ENCODE measurements at regions of chr9 and their contacts with region 1.

Region 1: GRCh38 chr9:96654443-96655197 is 497 bp downstream of the PRXL2C start:
- DNase-seq: peak; percentile 89
- ATAC-seq: peak; percentile 62
- H3K4me3 ChIP-seq: peak overlapping the region in 4 of 5 experiments; percentile 44 to 84 (median 60)
- H3K4me3 Mint-ChIP-seq: peak overlapping the region; percentile 96
- H3K27ac ChIP-seq: peak overlapping the region; percentile 69 to 85
- H3K27ac Mint-ChIP-seq: peak overlapping the region; percentile 98
- H3K4me1 ChIP-seq: peaks cover 8 to 16% of the 10 kb centered on the region in 2 donors
- H3K4me1 Mint-ChIP-seq: peaks cover 19% of the 10 kb centered on the region
- H3K27me3 ChIP-seq: no peaks in the 10 kb centered on the region
- H3K27me3 Mint-ChIP-seq: no peaks in the 10 kb centered on the region
- CTCF ChIP-seq: no peak

Region 2: DNA sequence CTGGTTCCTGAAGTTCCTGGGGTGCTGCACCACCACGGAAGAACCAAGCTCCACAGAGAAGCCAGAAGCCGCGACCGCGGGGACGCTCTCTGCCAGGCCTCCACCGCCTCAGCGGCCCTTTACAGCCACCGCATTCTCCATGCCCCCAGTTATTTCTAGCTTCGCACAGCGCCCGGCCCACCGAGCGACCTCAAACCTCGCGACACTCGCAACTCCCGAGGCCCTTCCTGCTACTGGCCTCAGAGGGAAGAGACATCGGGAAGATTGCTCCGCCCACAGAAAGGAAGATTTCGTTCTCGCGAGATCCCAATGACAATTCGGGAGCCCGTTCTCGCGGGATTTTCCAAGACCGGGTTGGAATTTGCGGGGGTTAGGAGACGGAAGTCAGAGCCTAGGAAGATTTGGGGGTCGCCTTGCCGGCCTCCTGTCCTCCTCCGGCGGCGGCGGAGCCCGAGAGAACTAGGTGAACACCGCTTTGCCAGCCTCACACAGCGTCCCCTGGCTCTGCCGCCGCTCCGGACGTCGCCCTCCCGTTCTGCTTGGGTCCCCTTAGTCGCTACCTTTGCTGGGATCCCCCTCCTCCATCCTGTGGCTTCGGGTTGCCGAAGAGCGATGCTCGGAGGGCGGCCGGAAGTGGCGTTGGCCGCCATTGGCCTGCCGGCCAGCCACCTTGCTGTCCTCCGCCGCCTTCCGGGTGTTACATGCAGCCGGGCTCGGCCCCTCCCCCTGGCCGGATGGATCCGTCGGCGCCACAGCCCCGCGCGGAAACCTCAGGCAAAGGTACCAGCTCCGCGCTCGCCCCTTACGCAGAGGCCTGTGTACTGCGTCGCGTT is 779.1 kb before region 1 on chr9 and contains the start of gene ERCC6L2:
- CTCF ChIA-PET with region 1: no interaction called
- POLR2A ChIA-PET with region 1: no interaction called
- intact Hi-C with region 1: loop called (anchors 10 kb)
- DNase-seq: peak; percentile 96
- ATAC-seq: peak; percentile 89
- H3K4me3 ChIP-seq: peak within 1 kb of the TSS in 2 of 5 experiments; percentile 76 to 82
- H3K4me3 Mint-ChIP-seq: no peak within 1 kb of the TSS
- H3K27ac ChIP-seq: no peak within 1 kb of the TSS
- H3K27ac Mint-ChIP-seq: no peak within 1 kb of the TSS
- H3K4me1 ChIP-seq: peaks cover 8 to 11% of the 10 kb centered on the region in 2 donors
- H3K4me1 Mint-ChIP-seq: peaks cover 23% of the 10 kb centered on the region
- H3K27me3 ChIP-seq: no peaks in the 10 kb centered on the region
- H3K27me3 Mint-ChIP-seq: no peaks in the 10 kb centered on the region
- CTCF ChIP-seq: no peak
- total RNA-seq, gene ERCC6L2: 52.0 and 54.4 TPM in 2 replicates

Region 3: GRCh38 chr9:96449845-96450612 is 204.6 kb before region 1 on chr9 and contains the start of gene HABP4:
- CTCF ChIA-PET with region 1: no interaction called
- POLR2A ChIA-PET with region 1: no interaction called
- intact Hi-C with region 1: loop called (anchors 1 kb)
- DNase-seq: peak; percentile 96
- ATAC-seq: peak; percentile 95
- H3K4me3 ChIP-seq: peak within 1 kb of the TSS; percentile 59 to 74 (median 65)
- H3K4me3 Mint-ChIP-seq: peak within 1 kb of the TSS; percentile 94
- H3K27ac ChIP-seq: no peak within 1 kb of the TSS
- H3K27ac Mint-ChIP-seq: peak within 1 kb of the TSS; percentile 83
- H3K4me1 ChIP-seq: peaks cover 12 to 13% of the 10 kb centered on the region in 2 donors
- H3K4me1 Mint-ChIP-seq: peaks cover 14% of the 10 kb centered on the region
- H3K27me3 ChIP-seq: peaks cover 0 to 8% (median 0%) of the 10 kb centered on the region in 4 experiments
- H3K27me3 Mint-ChIP-seq: peaks cover 7% of the 10 kb centered on the region
- CTCF ChIP-seq: no peak
- total RNA-seq, gene HABP4: 14.1 and 15.0 TPM in 2 replicates

Region 4: GRCh38 chr9:96686548-96687335 is 32.1 kb after region 1 on chr9:
- CTCF ChIA-PET with region 1: no interaction called
- POLR2A ChIA-PET with region 1: no interaction called
- intact Hi-C with region 1: loop called (anchors 1 kb)
- DNase-seq: peak; percentile 91
- ATAC-seq: peak; percentile 97
- H3K4me3 ChIP-seq: peak overlapping the region; percentile 9 to 72 (median 62)
- H3K4me3 Mint-ChIP-seq: peak overlapping the region; percentile 94
- H3K27ac ChIP-seq: peak overlapping the region; percentile 70 to 83
- H3K27ac Mint-ChIP-seq: peak overlapping the region; percentile 80
- H3K4me1 ChIP-seq: peaks cover 0 to 5% of the 10 kb centered on the region in 2 donors
- H3K4me1 Mint-ChIP-seq: peaks cover 6% of the 10 kb centered on the region
- H3K27me3 ChIP-seq: no peaks in the 10 kb centered on the region
- H3K27me3 Mint-ChIP-seq: no peaks in the 10 kb centered on the region
- CTCF ChIP-seq: peak; percentile 70

Region 5: GRCh38 chr9:96777426-96777864 is 122.8 kb after region 1 on chr9:
- CTCF ChIA-PET with region 1: no interaction called
- POLR2A ChIA-PET with region 1: no interaction called
- intact Hi-C with region 1: loop called (anchors 5 kb)
- DNase-seq: no peak
- ATAC-seq: no peak
- H3K4me3 ChIP-seq: peak overlapping the region; percentile 62 to 91 (median 80)
- H3K4me3 Mint-ChIP-seq: peak overlapping the region; percentile 97
- H3K27ac ChIP-seq: peak overlapping the region; percentile 57 to 90
- H3K27ac Mint-ChIP-seq: peak overlapping the region; percentile 95
- H3K4me1 ChIP-seq: peaks cover 7 to 14% of the 10 kb centered on the region in 2 donors
- H3K4me1 Mint-ChIP-seq: peaks cover 31% of the 10 kb centered on the region
- H3K27me3 ChIP-seq: no peaks in the 10 kb centered on the region
- H3K27me3 Mint-ChIP-seq: no peaks in the 10 kb centered on the region
- CTCF ChIP-seq: no peak

Measured in B cell (primary cell).